Right ventricle myocardium inferior (tissue), 1 donor: ENCODE measurements at regions of chr9 and their contacts with region 1.

Region 1: DNA sequence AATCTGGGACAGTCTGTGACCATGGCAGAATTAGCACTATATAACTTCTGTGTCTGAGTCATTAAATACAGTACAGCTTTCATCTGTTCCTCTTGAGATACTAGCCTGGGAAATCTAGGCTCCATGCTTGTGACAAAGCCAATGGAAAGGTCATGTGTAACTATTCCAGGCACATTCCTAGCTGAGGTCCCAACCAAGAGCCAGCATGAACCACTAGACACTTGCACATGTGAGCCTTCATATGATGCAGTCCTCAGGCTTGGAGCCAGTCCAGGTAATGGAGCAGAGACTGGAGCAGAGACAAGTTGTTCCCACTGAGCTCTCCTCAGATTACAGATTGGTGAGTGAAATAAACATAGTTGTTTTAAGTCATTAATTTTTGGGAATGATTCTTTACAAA is 412.4 kb upstream of the ZNF462 start:
- DNase-seq: no peak
- ATAC-seq: peak; percentile 95

Region 2: DNA sequence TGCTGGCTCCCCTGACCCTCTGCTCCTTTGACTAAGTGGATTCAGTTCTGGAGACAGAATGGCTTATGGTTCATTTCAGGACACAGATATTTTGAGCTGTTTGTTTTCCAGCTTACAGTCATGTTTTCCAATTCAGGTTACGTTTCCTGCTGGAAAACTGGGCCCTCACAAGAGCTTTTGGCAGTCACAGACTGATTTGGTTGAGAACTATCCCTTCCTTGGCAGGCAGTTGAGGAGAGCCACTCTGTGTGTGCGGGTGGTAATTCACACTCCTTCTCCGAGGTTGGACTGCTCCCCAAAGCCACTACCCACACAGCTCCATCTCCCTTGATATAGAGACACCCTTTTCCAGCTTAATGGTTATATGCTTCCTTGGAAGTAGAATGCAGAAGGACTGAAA is 221.7 kb before region 1 on chr9:
- intact Hi-C with region 1: loop called (anchors 10 kb)
- DNase-seq: no peak
- ATAC-seq: peak; percentile 94

Region 3: DNA sequence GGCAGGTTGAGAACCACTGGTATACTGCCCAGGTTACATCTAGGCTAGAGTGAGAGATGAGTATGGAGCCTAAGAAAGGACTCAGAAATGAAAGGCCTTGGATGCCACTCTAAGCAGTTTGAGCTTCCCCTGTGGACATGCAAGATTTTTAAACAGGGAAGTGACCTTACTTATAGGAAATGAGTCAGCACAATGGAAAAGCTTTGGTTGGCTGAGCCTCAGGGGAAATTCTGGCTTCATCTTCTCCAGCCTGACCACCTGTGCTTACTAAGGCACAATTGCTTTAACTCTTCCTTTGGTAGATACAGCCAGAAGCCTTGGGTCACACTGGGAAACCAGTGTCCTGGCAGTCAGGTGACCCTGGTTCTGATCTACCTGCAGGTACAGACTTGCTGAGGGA is 32.2 kb after region 1 on chr9:
- intact Hi-C with region 1: no loop called
- DNase-seq: no peak
- ATAC-seq: no peak